Endothelial cell of umbilical vein (primary cell): ENCODE measurements at regions of chr1 and their contacts with region 1.

Region 1: GRCh38 chr1:228131766-228132165 is 8.3 kb upstream of the GUK1 start:
- DNase-seq: no peak
- H3K4me3 ChIP-seq: no peak overlapping the region
- H3K27ac ChIP-seq: no peak overlapping the region
- H3K4me1 ChIP-seq: no peaks in the 10 kb centered on the region
- H3K27me3 ChIP-seq: peaks cover 16 to 19% of the 10 kb centered on the region in 2 experiments
- CTCF ChIP-seq: no peak
- POLR2A ChIP-seq: no peak

Region 2: GRCh38 chr1:227999056-227999930 is 132.5 kb before region 1 on chr1:
- CTCF ChIA-PET with region 1: interaction called, 38 read pairs
- POLR2A ChIA-PET with region 1: no interaction called
- dilution Hi-C with region 1: no loop called
- intact Hi-C with region 1: loop called (anchors 1 kb)
- DNase-seq: peak; percentile 71
- H3K4me3 ChIP-seq: no peak overlapping the region
- H3K27ac ChIP-seq: no peak overlapping the region
- H3K4me1 ChIP-seq: no peaks in the 10 kb centered on the region
- H3K27me3 ChIP-seq: peaks cover 0 to 4% of the 10 kb centered on the region in 2 experiments
- CTCF ChIP-seq: peak; percentile 75 to 92
- POLR2A ChIP-seq: no peak

Region 3: DNA sequence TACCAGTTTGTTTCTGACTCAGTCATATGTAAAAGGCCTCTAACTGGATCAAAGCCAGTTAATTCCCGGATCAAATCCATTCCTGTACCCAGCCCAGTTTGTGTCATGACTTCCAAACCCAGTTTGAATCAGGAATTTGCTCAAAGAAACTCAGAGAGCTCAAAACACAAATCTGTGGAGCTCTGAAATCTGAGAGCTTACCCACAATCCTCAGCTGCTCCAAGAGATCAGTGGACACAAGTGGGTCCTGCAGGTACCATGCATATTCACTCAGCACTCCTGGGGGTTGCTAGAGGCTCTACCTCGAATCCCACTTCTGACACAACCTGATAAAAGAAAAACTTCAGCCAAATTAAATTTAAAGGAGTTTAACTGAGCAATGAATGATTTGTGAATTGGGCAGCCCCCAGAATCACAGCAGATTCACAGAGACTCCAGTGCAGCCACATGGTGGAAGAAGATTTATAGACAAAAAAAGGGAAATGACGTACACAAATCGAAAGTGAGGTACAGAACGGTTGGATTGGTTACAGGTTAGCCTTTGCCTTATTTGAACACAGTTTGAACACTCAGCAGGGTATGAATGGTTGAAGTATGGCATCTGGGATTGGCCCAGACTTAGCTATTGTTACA is 10.8 kb before region 1 on chr1:
- CTCF ChIA-PET with region 1: interaction called, 11 read pairs
- POLR2A ChIA-PET with region 1: no interaction called
- dilution Hi-C with region 1: no loop called
- intact Hi-C with region 1: no loop called
- DNase-seq: no peak
- H3K4me3 ChIP-seq: no peak overlapping the region
- H3K27ac ChIP-seq: no peak overlapping the region
- H3K4me1 ChIP-seq: no peaks in the 10 kb centered on the region
- H3K27me3 ChIP-seq: peaks cover 20 to 21% of the 10 kb centered on the region in 2 experiments
- CTCF ChIP-seq: no peak
- POLR2A ChIP-seq: no peak

Region 4: GRCh38 chr1:228180271-228180958 is 48.6 kb after region 1 on chr1:
- CTCF ChIA-PET with region 1: interaction called, 4 read pairs
- POLR2A ChIA-PET with region 1: no interaction called
- dilution Hi-C with region 1: loop called (anchors 10 kb)
- intact Hi-C with region 1: loop called (anchors 2 kb)
- DNase-seq: no peak
- H3K4me3 ChIP-seq: no peak overlapping the region
- H3K27ac ChIP-seq: no peak overlapping the region
- H3K4me1 ChIP-seq: no peaks in the 10 kb centered on the region
- H3K27me3 ChIP-seq: no peaks in the 10 kb centered on the region
- CTCF ChIP-seq: peak in 1 of 2 donors; percentile 24
- POLR2A ChIP-seq: no peak

Region 5: GRCh38 chr1:228393248-228393699 is 261.5 kb after region 1 on chr1:
- CTCF ChIA-PET with region 1: interaction called, 27 read pairs
- POLR2A ChIA-PET with region 1: no interaction called
- dilution Hi-C with region 1: no loop called
- intact Hi-C with region 1: loop called (anchors 1 kb)
- DNase-seq: peak; percentile 75
- H3K4me3 ChIP-seq: no peak overlapping the region
- H3K27ac ChIP-seq: no peak overlapping the region
- H3K4me1 ChIP-seq: peaks cover 5% of the 10 kb centered on the region
- H3K27me3 ChIP-seq: no peaks in the 10 kb centered on the region
- CTCF ChIP-seq: peak; percentile 69 to 85
- POLR2A ChIP-seq: no peak

Region 6: DNA sequence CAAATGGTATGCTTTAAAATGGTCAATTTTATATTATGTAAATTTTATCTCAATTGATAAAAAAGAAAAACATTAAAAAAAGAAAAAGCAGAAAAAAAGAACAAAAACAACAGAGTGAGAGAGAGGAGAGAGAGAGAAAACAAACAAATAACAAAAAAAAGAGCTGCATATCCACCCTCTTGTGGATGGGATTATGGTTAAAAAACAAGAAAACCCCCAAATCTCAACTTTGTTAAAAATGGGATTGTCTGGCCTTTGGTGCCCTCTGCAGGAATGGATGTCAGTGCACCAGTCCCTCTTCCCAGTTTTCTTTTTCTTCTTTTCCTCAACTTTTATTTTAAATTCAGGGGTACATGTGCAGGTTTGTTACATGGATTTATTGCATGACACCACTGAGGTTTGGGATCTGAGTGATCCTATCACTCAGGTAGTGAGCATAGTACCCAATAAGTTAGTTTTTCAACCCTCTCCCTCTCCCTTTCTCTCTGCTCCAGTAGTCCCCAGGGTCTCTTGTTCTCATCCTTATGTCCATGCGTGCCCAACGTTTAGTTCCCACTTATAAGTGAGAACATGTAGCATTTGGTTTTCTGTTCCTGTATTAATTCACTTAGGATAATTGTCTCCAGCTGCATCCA is 383.6 kb after region 1 on chr1:
- CTCF ChIA-PET with region 1: interaction called, 10 read pairs
- POLR2A ChIA-PET with region 1: no interaction called
- dilution Hi-C with region 1: no loop called
- intact Hi-C with region 1: loop called (anchors 1 kb)
- DNase-seq: peak; percentile 60
- H3K4me3 ChIP-seq: no peak overlapping the region
- H3K27ac ChIP-seq: no peak overlapping the region
- H3K4me1 ChIP-seq: no peaks in the 10 kb centered on the region
- H3K27me3 ChIP-seq: peaks cover 21 to 22% of the 10 kb centered on the region in 2 experiments
- CTCF ChIP-seq: peak; percentile 56 to 58
- POLR2A ChIP-seq: no peak